AG04449 (cell line): ENCODE measurements at regions of chr1 and their contacts with region 1.

Region 1: GRCh38 chr1:27979151-27979858 is 19.5 kb downstream of the XKR8 start:
- DNase-seq: no peak
- H3K4me3 ChIP-seq: no peak overlapping the region
- CTCF ChIP-seq: peak; percentile 11

Region 2: GRCh38 chr1:27858072-27858958 is 121.0 kb before region 1 on chr1:
- CTCF ChIA-PET with region 1: interaction called, 110 read pairs
- POLR2A ChIA-PET with region 1: no interaction called
- DNase-seq: peak; percentile 17
- H3K4me3 ChIP-seq: no peak overlapping the region
- CTCF ChIP-seq: peak; percentile 92

Region 3: DNA sequence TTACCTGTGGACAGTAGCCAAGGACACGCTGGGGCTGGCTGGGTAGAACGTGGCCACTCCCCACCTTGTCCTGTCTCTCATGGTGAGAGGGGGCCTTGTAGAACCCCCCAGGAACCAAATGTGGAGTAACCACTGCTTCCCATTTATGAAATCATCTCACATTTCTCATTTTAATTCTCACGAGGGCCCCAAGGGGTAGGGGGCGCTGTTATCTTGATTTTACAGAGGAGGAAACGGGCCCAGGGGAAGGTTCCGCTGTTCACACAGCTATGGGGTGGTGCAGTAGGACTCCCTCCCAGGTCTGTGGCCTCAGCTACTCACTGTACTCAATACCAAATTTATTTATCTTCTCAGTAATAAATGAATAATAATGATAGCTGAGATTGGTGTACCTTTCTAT is 39.0 kb before region 1 on chr1:
- CTCF ChIA-PET with region 1: interaction called, 45 read pairs
- POLR2A ChIA-PET with region 1: no interaction called
- DNase-seq: no peak
- H3K4me3 ChIP-seq: no peak overlapping the region
- CTCF ChIP-seq: no peak

Region 4: GRCh38 chr1:27968694-27969093 is 10.6 kb before region 1 on chr1:
- CTCF ChIA-PET with region 1: interaction called, 19 read pairs
- POLR2A ChIA-PET with region 1: no interaction called
- DNase-seq: peak; percentile 74
- H3K4me3 ChIP-seq: no peak overlapping the region
- CTCF ChIP-seq: no peak

Region 5: DNA sequence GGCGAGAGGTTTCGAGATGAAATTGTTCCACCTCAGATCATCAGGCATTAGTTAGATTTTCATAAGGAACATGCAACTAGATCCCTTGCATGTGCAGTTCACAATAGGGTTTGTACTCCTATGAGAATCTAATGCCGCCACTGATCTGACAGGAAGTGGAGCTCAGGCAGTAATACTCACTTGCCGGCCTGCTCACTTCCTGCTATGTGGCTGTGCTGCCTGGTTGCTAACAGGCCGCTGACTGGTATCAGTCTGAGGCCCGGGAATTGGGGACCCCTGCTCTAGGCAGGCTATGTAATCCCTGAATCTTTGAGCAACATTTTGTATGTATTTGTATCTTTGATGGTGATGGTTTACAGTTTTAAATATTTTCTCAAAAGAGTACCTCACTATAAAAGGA is 13.0 kb after region 1 on chr1:
- CTCF ChIA-PET with region 1: interaction called, 25 read pairs
- POLR2A ChIA-PET with region 1: no interaction called
- DNase-seq: no peak
- H3K4me3 ChIP-seq: no peak overlapping the region
- CTCF ChIP-seq: no peak